WTC11 (cell line): ENCODE measurements at regions of chr18 and their contacts with region 1.

Region 1: GRCh38 chr18:24051031-24051947 is 36.7 kb downstream of the TTC39C start:
- DNase-seq: no peak
- ATAC-seq: no peak
- H3K4me3 Mint-ChIP-seq: no peak overlapping the region
- H3K27ac Mint-ChIP-seq: no peak overlapping the region
- H3K4me1 Mint-ChIP-seq: peaks cover 24% of the 10 kb centered on the region
- H3K27me3 Mint-ChIP-seq: no peaks in the 10 kb centered on the region
- CTCF ChIP-seq: no peak

Region 2: GRCh38 chr18:22902093-22902492 is 1149.2 kb before region 1 on chr18:
- CTCF ChIA-PET with region 1: no interaction called
- POLR2A ChIA-PET with region 1: interaction called, 12 read pairs
- DNase-seq: no peak
- ATAC-seq: no peak
- H3K4me3 Mint-ChIP-seq: no peak overlapping the region
- H3K27ac Mint-ChIP-seq: no peak overlapping the region
- H3K4me1 Mint-ChIP-seq: no peaks in the 10 kb centered on the region
- H3K27me3 Mint-ChIP-seq: no peaks in the 10 kb centered on the region
- CTCF ChIP-seq: no peak

Region 3: GRCh38 chr18:24063121-24063731 is 11.9 kb after region 1 on chr18:
- CTCF ChIA-PET with region 1: no interaction called
- POLR2A ChIA-PET with region 1: no interaction called
- DNase-seq: no peak
- ATAC-seq: no peak
- H3K4me3 Mint-ChIP-seq: no peak overlapping the region
- H3K27ac Mint-ChIP-seq: no peak overlapping the region
- H3K4me1 Mint-ChIP-seq: peaks cover 8% of the 10 kb centered on the region
- H3K27me3 Mint-ChIP-seq: no peaks in the 10 kb centered on the region
- CTCF ChIP-seq: no peak